ENCODE measurements at regions of chr19 and their contacts with region 1.

Region 1: GRCh38 chr19:6412447-6413091 is 12.0 kb downstream of the KHSRP start:
- DNase-seq: peak in 8 of 9 experiments; percentile 19 to 68 (median 58)
- ATAC-seq: peak; percentile 88
- H3K4me3 ChIP-seq: no peak overlapping the region
- H3K4me3 Mint-ChIP-seq: no peak overlapping the region
- H3K27ac ChIP-seq: no peak overlapping the region
- H3K27ac Mint-ChIP-seq: no peak overlapping the region
- H3K4me1 ChIP-seq: no peaks in the 10 kb centered on the region
- H3K4me1 Mint-ChIP-seq: no peaks in the 10 kb centered on the region
- H3K27me3 ChIP-seq: no peaks in the 10 kb centered on the region
- H3K27me3 Mint-ChIP-seq: no peaks in the 10 kb centered on the region
- CTCF ChIP-seq: peak; percentile 64

Region 2: GRCh38 chr19:6218491-6219162 is 193.9 kb before region 1 on chr19:
- CTCF ChIA-PET with region 1: no interaction called
- POLR2A ChIA-PET with region 1: no interaction called
- intact Hi-C with region 1: loop called in 1 of 2 experiments (anchors 1 kb)
- DNase-seq: peak; percentile 65 to 91 (median 80)
- ATAC-seq: peak; percentile 95
- H3K4me3 ChIP-seq: no peak overlapping the region
- H3K4me3 Mint-ChIP-seq: no peak overlapping the region
- H3K27ac ChIP-seq: no peak overlapping the region
- H3K27ac Mint-ChIP-seq: peak overlapping the region; percentile 67
- H3K4me1 ChIP-seq: no peaks in the 10 kb centered on the region
- H3K4me1 Mint-ChIP-seq: peaks cover 3% of the 10 kb centered on the region
- H3K27me3 ChIP-seq: no peaks in the 10 kb centered on the region
- H3K27me3 Mint-ChIP-seq: no peaks in the 10 kb centered on the region
- CTCF ChIP-seq: peak; percentile 93

Region 3: DNA sequence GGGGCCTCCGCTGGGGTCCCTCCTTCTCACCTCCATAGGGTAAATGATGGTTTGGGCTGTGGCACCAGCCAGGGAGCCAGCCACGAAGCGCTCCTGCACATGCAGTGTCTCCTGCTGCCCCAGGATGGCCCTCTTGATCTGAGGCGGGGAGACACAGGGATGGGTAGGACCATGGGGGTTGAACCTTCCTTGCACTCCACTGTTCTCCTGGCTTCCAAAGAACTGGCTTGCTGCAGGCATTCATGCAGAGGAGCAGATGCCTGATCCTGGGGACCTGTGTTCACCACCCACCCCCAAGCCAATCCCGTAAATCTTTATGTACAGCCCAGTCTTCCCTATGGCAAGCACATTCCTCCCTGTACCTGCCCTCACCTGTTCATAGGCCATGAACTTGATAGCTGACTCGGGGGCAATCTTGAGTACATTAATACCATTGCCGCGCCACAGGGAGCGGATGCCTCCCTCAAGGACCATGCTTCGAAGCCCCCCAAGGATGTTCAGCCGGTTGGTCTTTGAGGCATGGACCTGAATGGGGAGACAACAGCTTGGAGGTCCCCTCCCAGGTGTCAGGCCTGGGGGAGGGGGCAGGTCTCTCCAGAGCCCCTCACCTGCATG is 41.5 kb after region 1 on chr19:
- CTCF ChIA-PET with region 1: no interaction called
- POLR2A ChIA-PET with region 1: no interaction called
- intact Hi-C with region 1: no loop called
- DNase-seq: no peak
- ATAC-seq: no peak
- H3K4me3 ChIP-seq: no peak overlapping the region
- H3K4me3 Mint-ChIP-seq: no peak overlapping the region
- H3K27ac ChIP-seq: no peak overlapping the region
- H3K27ac Mint-ChIP-seq: no peak overlapping the region
- H3K4me1 ChIP-seq: peaks cover 5% of the 10 kb centered on the region
- H3K4me1 Mint-ChIP-seq: peaks cover 10% of the 10 kb centered on the region
- H3K27me3 ChIP-seq: no peaks in the 10 kb centered on the region
- H3K27me3 Mint-ChIP-seq: no peaks in the 10 kb centered on the region
- CTCF ChIP-seq: no peak

Measured in CD8-positive, alpha-beta T cell (primary cell).